GM10248 (cell line): ENCODE measurements at regions of chr1 and their contacts with region 1.

Region 1: GRCh38 chr1:119316870-119317416 is 51.6 kb upstream of the HAO2 start:
- DNase-seq: no peak
- CTCF ChIP-seq: no peak

Region 2: DNA sequence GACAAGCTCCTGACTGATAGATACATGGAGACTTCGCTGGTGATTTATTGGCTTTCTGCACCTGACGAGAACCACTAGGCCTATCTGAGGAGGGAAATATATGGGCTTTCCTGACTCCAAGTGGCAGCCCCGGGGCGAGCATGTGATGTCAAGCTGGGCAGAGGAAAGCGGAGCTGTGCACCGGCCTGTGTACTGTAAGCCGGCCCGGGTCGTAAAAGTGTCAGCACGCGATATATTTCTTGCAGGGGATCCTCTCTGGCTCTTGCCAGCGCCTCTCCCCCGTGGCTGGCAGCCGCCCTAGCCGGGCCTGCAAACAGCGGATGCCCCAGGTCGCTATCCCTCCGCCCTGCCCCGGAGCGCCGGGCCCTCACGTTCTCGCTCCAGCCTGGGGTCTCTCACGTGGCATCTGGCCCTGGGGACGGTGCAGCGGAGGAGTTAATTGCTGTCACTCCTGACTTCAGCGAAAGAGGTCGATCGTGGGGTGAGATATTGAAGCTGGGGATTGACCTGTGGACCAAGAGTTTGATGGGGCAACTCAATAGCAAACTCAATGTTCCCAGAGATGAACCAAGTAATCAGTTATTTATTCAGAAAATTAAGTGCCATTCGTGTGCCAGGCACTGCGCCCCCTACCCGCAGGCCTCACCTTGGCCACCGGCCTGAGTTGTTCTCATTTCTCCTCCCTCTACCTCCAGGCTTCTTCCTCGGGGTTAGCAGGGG is 10.7 kb after region 1 on chr1:
- CTCF ChIA-PET with region 1: interaction called, 18 read pairs
- POLR2A ChIA-PET with region 1: no interaction called
- DNase-seq: no peak
- CTCF ChIP-seq: peak; percentile 43